ENCODE measurements at regions of chr2 and their contacts with region 1.

Region 1: GRCh38 chr2:43024515-43025011 is 201.8 kb downstream of the ZFP36L2 start:
- DNase-seq: peak; percentile 64
- H3K4me3 ChIP-seq: no peak overlapping the region
- H3K27ac ChIP-seq: no peak overlapping the region
- H3K4me1 ChIP-seq: no peaks in the 10 kb centered on the region
- H3K27me3 ChIP-seq: no peaks in the 10 kb centered on the region
- CTCF ChIP-seq: peak; percentile 88

Region 2: GRCh38 chr2:41475959-41476358 is 1548.6 kb before region 1 on chr2:
- CTCF ChIA-PET with region 1: no interaction called
- POLR2A ChIA-PET with region 1: no interaction called
- intact Hi-C with region 1: no loop called
- DNase-seq: no peak
- H3K4me3 ChIP-seq: no peak overlapping the region
- H3K27ac ChIP-seq: no peak overlapping the region
- H3K4me1 ChIP-seq: no peaks in the 10 kb centered on the region
- H3K27me3 ChIP-seq: no peaks in the 10 kb centered on the region
- CTCF ChIP-seq: no peak

Region 3: DNA sequence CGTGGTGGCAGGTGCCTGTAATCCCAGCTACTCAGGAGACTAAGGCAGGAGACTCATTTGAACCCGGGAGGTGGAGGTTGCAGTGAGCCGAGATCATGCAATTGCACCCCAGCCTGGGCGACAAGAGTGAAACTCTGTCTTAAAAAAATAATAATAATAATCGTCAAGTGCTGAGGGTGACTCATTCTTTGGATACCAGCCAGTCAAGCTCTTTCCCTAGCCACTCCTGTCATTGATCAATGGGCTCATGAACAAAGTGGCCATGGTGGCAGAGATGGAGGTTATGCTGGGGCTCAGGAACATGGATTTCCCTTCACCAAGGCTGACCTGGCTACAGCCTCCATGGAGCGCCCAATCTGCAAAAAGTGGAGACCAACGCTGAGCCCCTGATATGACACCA is 137.6 kb before region 1 on chr2:
- CTCF ChIA-PET with region 1: no interaction called
- POLR2A ChIA-PET with region 1: no interaction called
- intact Hi-C with region 1: no loop called
- DNase-seq: no peak
- H3K4me3 ChIP-seq: no peak overlapping the region
- H3K27ac ChIP-seq: no peak overlapping the region
- H3K4me1 ChIP-seq: peaks cover 6% of the 10 kb centered on the region
- H3K27me3 ChIP-seq: no peaks in the 10 kb centered on the region
- CTCF ChIP-seq: no peak

Region 4: GRCh38 chr2:43086451-43087221 is 62.1 kb after region 1 on chr2:
- CTCF ChIA-PET with region 1: no interaction called
- POLR2A ChIA-PET with region 1: no interaction called
- intact Hi-C with region 1: no loop called
- DNase-seq: peak; percentile 86
- H3K4me3 ChIP-seq: no peak overlapping the region
- H3K27ac ChIP-seq: peak overlapping the region; percentile 64
- H3K4me1 ChIP-seq: peaks cover 41% of the 10 kb centered on the region
- H3K27me3 ChIP-seq: no peaks in the 10 kb centered on the region
- CTCF ChIP-seq: no peak

Region 5: GRCh38 chr2:43097644-43098408 is 73.3 kb after region 1 on chr2:
- CTCF ChIA-PET with region 1: interaction called, 10 read pairs
- POLR2A ChIA-PET with region 1: no interaction called
- intact Hi-C with region 1: no loop called
- DNase-seq: no peak
- H3K4me3 ChIP-seq: no peak overlapping the region
- H3K27ac ChIP-seq: no peak overlapping the region
- H3K4me1 ChIP-seq: no peaks in the 10 kb centered on the region
- H3K27me3 ChIP-seq: no peaks in the 10 kb centered on the region
- CTCF ChIP-seq: no peak

Region 6: DNA sequence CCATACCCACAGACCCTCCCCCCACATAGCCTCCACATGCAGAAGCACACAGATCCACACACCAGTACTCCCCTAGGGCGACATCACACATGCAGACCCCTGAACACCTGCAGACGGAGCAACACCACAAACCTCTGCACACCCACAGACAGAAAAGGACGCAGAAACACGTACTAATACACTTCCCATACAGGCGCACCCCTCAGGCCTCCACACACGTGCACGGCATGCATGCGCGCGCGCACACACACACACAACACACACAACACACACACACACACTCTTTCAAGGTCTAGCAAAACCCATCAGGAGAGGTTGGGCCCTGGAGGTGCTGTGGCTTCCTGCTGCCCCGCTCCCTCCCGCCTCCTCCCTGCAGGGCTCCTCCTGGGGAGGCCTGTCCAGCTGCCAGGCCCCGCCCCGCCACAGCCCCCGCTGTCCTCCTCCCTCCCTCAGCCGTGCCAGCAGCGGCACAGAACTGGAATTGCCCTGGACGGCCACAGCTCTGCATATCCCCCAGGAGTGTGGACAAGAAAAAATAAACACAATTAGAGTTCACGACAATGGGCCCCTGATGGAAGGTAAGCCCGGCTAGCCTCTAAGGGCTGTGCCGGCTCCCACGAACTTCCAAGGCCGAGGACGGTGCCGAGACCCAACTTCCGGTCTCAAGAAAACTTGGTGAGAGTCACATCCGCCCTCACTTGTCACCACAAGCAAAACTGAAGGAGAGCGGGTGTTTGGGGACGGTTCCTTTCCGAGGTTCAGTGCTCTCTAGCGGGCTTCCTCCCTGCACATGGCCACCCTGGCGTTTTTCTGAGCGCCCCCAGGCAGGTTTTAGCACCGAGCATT is 195.0 kb after region 1 on chr2:
- CTCF ChIA-PET with region 1: no interaction called
- POLR2A ChIA-PET with region 1: no interaction called
- intact Hi-C with region 1: loop called (anchors 5 kb)
- DNase-seq: peak; percentile 78
- H3K4me3 ChIP-seq: peak overlapping the region; percentile 41
- H3K27ac ChIP-seq: peak overlapping the region; percentile 85
- H3K4me1 ChIP-seq: peaks cover 51% of the 10 kb centered on the region
- H3K27me3 ChIP-seq: no peaks in the 10 kb centered on the region
- CTCF ChIP-seq: no peak

Region 7: GRCh38 chr2:43585708-43586107 is 561.1 kb after region 1 on chr2:
- CTCF ChIA-PET with region 1: interaction called, 12 read pairs
- POLR2A ChIA-PET with region 1: no interaction called
- intact Hi-C with region 1: no loop called
- DNase-seq: no peak
- H3K4me3 ChIP-seq: no peak overlapping the region
- H3K27ac ChIP-seq: no peak overlapping the region
- H3K4me1 ChIP-seq: no peaks in the 10 kb centered on the region
- H3K27me3 ChIP-seq: no peaks in the 10 kb centered on the region
- CTCF ChIP-seq: no peak